ENCODE measurements at regions of chr6 and their contacts with region 1.

Region 1: GRCh38 chr6:113858480-113859348 is 1.6 kb downstream of the MARCKS start:
- DNase-seq: peak; percentile 75
- H3K4me3 Mint-ChIP-seq: peak overlapping the region; percentile 75
- H3K27ac Mint-ChIP-seq: no peak overlapping the region
- H3K4me1 Mint-ChIP-seq: peaks cover 18% of the 10 kb centered on the region
- H3K27me3 Mint-ChIP-seq: peaks cover 37% of the 10 kb centered on the region

Region 2: DNA sequence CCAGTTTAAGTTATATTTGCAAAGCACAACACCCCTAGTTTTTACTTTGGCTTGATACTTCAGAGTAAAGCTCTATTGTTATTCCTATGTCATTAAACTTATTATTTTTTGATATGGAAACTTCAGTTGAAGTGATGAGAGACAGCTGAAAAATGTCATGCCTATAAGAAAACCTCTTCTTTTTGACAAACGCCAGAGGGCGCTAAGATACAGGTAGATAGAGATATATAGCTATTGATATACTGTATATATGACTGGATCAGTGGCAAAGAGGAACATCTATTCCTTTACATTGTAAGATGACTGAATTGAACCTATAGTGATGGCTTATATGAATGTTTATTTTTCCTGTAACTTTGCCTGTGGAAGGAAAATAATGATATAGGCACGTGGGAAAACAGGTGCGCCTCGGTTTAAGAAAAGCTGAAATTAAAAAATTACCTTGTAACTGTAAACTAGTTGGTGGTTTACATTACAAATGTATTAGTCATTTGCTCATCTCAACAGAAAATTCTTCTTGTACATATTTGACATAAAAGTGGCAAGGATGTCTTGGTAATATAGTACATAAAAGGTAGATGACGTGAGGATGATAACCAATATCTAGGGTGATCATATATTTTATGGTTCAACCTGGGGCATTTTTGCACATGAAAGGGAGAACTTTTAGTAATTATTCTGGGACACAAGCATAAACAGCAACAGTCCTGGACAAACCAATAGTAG is 1678.5 kb before region 1 on chr6:
- intact Hi-C with region 1: loop called (anchors 2 kb)
- DNase-seq: peak; percentile 19
- H3K4me3 Mint-ChIP-seq: no peak overlapping the region
- H3K27ac Mint-ChIP-seq: no peak overlapping the region
- H3K4me1 Mint-ChIP-seq: no peaks in the 10 kb centered on the region
- H3K27me3 Mint-ChIP-seq: peaks cover 46% of the 10 kb centered on the region

Region 3: GRCh38 chr6:112289038-112289566 is 1569.6 kb before region 1 on chr6:
- intact Hi-C with region 1: loop called (anchors 2 kb)
- DNase-seq: no peak
- H3K4me3 Mint-ChIP-seq: no peak overlapping the region
- H3K27ac Mint-ChIP-seq: no peak overlapping the region
- H3K4me1 Mint-ChIP-seq: peaks cover 22% of the 10 kb centered on the region
- H3K27me3 Mint-ChIP-seq: peaks cover 66% of the 10 kb centered on the region

Region 4: DNA sequence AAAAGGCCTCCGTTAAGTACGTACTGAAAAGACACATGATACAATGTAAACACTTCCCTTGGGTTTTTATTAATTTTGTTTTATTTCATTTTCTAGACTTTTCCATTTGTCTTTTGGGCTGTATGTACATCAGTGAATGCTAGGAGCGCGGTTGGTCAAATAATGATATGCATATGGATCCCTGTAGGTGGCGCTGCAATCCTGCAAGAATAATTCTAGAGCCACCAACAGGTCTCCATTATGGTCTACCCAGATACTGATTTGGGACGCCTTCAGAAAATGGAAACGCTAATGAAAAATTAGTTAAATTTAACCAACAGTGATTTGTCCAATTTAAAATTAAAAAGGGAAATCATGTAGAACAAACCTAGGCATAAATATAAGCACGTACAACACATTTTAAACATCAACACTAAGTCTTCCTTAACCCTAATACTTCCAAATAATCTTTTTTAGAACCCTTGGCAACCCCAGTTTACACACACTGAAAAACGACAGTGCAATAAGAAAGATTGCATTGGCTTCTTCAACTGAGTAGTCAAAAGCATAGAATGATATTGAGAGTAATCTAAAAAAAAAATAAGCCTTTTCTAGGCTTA is 1078.1 kb before region 1 on chr6:
- intact Hi-C with region 1: loop called (anchors 5 kb)
- DNase-seq: no peak
- H3K4me3 Mint-ChIP-seq: no peak overlapping the region
- H3K27ac Mint-ChIP-seq: no peak overlapping the region
- H3K4me1 Mint-ChIP-seq: no peaks in the 10 kb centered on the region
- H3K27me3 Mint-ChIP-seq: no peaks in the 10 kb centered on the region

Region 5: DNA sequence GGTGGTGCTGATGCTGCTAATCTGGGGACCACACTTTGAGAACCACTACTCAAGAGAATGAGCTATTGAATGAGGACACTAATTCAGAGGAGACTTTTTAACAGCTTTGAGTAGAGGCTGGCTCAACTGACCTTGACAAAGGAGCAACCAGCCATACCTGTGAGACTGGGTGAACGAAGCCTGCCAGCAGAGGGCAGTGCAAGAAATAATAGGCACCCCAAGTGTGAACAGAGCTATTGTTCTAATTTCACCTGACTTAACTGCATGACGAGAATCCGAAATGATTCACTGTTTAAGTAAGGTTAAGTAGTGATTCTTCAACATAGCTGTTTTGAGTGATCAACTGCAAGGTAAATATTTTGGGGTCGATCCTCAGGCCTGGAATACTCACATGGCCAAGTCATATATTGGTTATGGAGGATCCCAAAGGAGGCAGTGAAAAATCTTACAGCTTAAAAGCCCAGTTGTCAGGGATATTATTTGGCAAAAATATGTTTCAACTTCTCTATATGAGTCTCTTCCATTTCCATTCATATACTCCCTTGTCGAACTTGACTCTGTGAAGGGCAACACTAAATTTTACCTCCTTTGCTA is 552.1 kb before region 1 on chr6:
- intact Hi-C with region 1: loop called (anchors 1 kb)
- DNase-seq: peak; percentile 13
- H3K4me3 Mint-ChIP-seq: no peak overlapping the region
- H3K27ac Mint-ChIP-seq: no peak overlapping the region
- H3K4me1 Mint-ChIP-seq: no peaks in the 10 kb centered on the region
- H3K27me3 Mint-ChIP-seq: no peaks in the 10 kb centered on the region

Region 6: GRCh38 chr6:113632220-113632864 is 226.4 kb before region 1 on chr6:
- intact Hi-C with region 1: loop called (anchors 1 kb)
- DNase-seq: no peak
- H3K4me3 Mint-ChIP-seq: no peak overlapping the region
- H3K27ac Mint-ChIP-seq: peak overlapping the region; percentile 51
- H3K4me1 Mint-ChIP-seq: peaks cover 20% of the 10 kb centered on the region
- H3K27me3 Mint-ChIP-seq: peaks cover 9% of the 10 kb centered on the region

Region 7: GRCh38 chr6:113970805-113971676 is 112.3 kb after region 1 on chr6 and contains the start of gene HDAC2:
- intact Hi-C with region 1: loop called (anchors 5 kb)
- DNase-seq: peak; percentile 83
- H3K4me3 Mint-ChIP-seq: peak within 1 kb of the TSS; percentile 94
- H3K27ac Mint-ChIP-seq: peak within 1 kb of the TSS; percentile 98
- H3K4me1 Mint-ChIP-seq: peaks cover 27% of the 10 kb centered on the region
- H3K27me3 Mint-ChIP-seq: no peaks in the 10 kb centered on the region
- total RNA-seq, gene HDAC2: 115 and 125 TPM in 2 replicates